GM12878 (cell line): ENCODE measurements at regions of chr12 and their contacts with region 1.

Region 1: DNA sequence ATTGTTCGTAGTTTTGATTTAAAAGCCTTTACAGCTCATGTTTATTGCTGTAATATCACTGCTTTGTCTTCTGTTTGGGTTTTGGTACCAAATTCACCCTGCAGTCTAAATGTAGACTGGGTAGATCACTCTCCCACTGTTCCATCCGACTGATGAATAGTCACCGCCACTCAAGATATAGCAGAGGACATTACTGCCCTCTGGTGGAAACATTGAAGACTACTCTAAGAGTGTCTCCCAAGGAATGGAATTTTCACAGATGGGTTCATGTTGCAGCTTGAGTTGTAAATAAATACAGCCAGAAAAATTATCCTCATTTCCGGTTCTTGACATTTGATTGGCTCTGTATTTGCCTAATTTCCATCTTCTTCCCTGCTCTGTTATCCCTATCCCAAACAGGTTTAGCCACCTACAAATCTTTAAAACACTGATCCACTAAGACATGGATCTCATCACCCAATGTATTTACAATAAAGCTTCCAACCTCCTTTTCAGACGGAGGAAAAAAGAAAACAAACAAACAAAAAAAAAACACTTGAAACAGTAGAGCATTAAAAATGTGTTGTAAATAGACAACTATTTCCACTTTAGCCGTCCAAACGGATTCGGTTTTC is 198.3 kb upstream of the CPNE8 start:
- DNase-seq: peak; percentile 15
- ATAC-seq: peak; percentile 99
- H3K4me3 ChIP-seq: no peak overlapping the region
- H3K27ac ChIP-seq: no peak overlapping the region
- H3K4me1 ChIP-seq: no peaks in the 10 kb centered on the region
- H3K27me3 ChIP-seq: no peaks in the 10 kb centered on the region
- CTCF ChIP-seq: peak; percentile 66 to 77 (median 67)
- EP300 ChIP-seq: no peak
- POLR2A ChIP-seq: no peak
- RAD21 ChIP-seq: peak; percentile 94

Region 2: DNA sequence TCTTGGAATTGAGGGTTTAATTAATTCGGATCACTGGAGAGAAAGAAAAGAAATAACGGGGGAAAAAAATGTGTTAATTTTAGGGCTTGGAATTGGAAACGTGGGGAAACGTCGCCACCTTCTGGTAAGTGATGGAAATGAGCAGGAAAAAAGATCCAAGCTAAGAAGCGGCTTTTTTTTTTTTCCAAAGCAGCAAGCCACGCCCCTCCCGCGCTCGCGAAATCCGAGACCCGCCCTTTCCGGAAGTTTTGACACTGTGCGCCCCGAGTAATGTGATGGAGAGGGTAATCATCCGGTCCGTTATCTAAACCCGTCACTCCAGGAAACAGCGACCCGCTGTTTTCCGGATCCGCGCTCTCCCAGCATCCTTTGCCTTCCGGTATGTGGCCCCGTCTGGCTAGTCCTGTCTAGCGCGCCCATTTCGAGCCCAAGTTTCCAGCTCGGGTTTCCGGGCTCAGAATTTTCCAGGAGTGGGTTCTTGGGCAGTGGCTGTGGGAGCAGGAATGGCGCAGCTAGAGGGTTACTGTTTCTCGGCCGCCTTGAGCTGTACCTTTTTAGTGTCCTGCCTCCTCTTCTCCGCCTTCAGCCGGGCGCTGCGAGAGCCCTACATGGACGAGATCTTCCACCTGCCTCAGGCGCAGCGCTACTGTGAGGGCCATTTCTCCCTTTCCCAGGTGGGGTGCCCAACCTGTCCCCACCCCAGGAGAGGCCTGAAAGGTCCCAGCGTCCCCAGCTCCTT is 787.1 kb before region 1 on chr12 and contains the start of gene ALG10B:
- CTCF ChIA-PET with region 1: interaction called, 13 read pairs
- POLR2A ChIA-PET with region 1: no interaction called
- RAD21 ChIA-PET with region 1: interaction called, 4 read pairs
- SMC1A ChIA-PET with region 1: interaction called, 4 read pairs
- in situ Hi-C with region 1: no loop called
- intact Hi-C with region 1: no loop called
- DNase-seq: peak; percentile 84
- ATAC-seq: peak; percentile 100
- H3K4me3 ChIP-seq: peak within 1 kb of the TSS; percentile 86
- H3K27ac ChIP-seq: peak within 1 kb of the TSS; percentile 73
- H3K4me1 ChIP-seq: no peaks in the 10 kb centered on the region
- H3K27me3 ChIP-seq: no peaks in the 10 kb centered on the region
- CTCF ChIP-seq: peak; percentile 53 to 61 (median 58); a peak in 5 of 6 replicates
- EP300 ChIP-seq: no peak
- POLR2A ChIP-seq: peak; percentile 73
- RAD21 ChIP-seq: peak; percentile 73
- polyA plus RNA-seq, gene ALG10B: 2.0 to 4.5 TPM

Region 3: GRCh38 chr12:38332814-38333213 is 770.8 kb before region 1 on chr12:
- CTCF ChIA-PET with region 1: interaction called, 38 read pairs
- POLR2A ChIA-PET with region 1: no interaction called
- RAD21 ChIA-PET with region 1: interaction called, 13 read pairs
- SMC1A ChIA-PET with region 1: interaction called, 12 read pairs
- in situ Hi-C with region 1: loop called (anchors 5 kb)
- intact Hi-C with region 1: loop called (anchors 1 kb)
- DNase-seq: no peak
- ATAC-seq: no peak
- H3K4me3 ChIP-seq: no peak overlapping the region
- H3K27ac ChIP-seq: no peak overlapping the region
- H3K4me1 ChIP-seq: no peaks in the 10 kb centered on the region
- H3K27me3 ChIP-seq: no peaks in the 10 kb centered on the region
- CTCF ChIP-seq: no peak
- EP300 ChIP-seq: no peak
- POLR2A ChIP-seq: no peak
- RAD21 ChIP-seq: no peak

Region 4: DNA sequence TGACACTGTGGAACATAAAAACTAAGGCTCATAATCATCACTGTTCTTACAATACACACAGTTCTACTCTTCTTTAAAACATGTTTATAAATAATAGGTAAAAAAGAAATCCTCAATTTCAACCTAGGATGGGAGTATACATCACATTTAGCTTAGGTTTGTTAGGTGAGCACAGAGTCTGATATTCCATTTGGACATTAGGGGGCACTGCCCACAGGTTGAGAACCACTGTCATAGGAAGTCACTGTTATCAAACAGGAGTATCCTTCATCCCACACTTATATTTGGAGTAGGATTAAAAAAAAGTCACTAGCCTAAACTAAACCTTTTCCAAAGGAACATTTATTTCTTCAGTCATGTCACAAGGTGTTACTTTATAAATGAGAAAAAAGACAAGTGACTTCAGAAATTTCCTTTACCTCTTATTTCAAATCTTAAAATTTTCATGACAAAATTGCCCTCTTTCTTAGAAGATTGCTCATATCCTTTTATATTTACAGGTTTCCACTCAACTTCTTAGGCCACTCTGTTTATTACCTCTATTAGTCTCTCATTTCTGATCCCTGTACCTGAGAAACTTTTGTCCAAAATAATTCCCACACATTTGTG is 438.9 kb before region 1 on chr12:
- CTCF ChIA-PET with region 1: interaction called, 15 read pairs
- POLR2A ChIA-PET with region 1: no interaction called
- RAD21 ChIA-PET with region 1: interaction called, 3 read pairs
- SMC1A ChIA-PET with region 1: interaction called, 4 read pairs
- in situ Hi-C with region 1: loop called (anchors 25 kb)
- intact Hi-C with region 1: loop called (anchors 10 kb)
- DNase-seq: peak; percentile 15
- ATAC-seq: peak; percentile 94
- H3K4me3 ChIP-seq: no peak overlapping the region
- H3K27ac ChIP-seq: no peak overlapping the region
- H3K4me1 ChIP-seq: no peaks in the 10 kb centered on the region
- H3K27me3 ChIP-seq: no peaks in the 10 kb centered on the region
- CTCF ChIP-seq: peak; percentile 58 to 65 (median 61)
- EP300 ChIP-seq: no peak
- POLR2A ChIP-seq: no peak
- RAD21 ChIP-seq: peak; percentile 63

Region 5: GRCh38 chr12:38921025-38921677 is 182.5 kb before region 1 on chr12:
- CTCF ChIA-PET with region 1: interaction called, 118 read pairs
- POLR2A ChIA-PET with region 1: no interaction called
- RAD21 ChIA-PET with region 1: interaction called, 44 read pairs
- SMC1A ChIA-PET with region 1: interaction called, 90 read pairs
- in situ Hi-C with region 1: loop called (anchors 5 kb)
- intact Hi-C with region 1: loop called (anchors 1 kb)
- DNase-seq: no peak
- ATAC-seq: peak; percentile 95
- H3K4me3 ChIP-seq: no peak overlapping the region
- H3K27ac ChIP-seq: no peak overlapping the region
- H3K4me1 ChIP-seq: no peaks in the 10 kb centered on the region
- H3K27me3 ChIP-seq: no peaks in the 10 kb centered on the region
- CTCF ChIP-seq: peak; percentile 60 to 73 (median 61)
- EP300 ChIP-seq: no peak
- POLR2A ChIP-seq: no peak
- RAD21 ChIP-seq: peak; percentile 63

Region 6: DNA sequence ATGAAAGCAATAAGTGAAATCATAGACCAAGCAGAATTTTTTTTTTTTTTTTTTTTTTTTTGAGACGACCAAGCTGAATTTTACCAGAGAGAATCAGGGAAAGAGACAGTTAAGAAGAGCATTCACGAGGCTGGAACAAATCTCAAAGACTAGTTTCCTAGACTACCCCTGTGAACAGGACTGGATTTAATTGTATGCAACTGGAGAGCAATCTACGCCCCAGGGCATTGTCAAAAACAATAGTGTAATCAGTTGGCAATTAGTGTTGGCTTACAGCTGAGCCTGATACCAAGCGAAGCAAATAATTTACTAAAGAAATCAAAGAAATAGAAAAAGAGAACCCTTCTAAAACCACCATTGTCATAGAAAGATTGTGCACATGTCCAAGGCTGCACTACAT is 34.6 kb after region 1 on chr12:
- CTCF ChIA-PET with region 1: no interaction called
- POLR2A ChIA-PET with region 1: no interaction called
- RAD21 ChIA-PET with region 1: no interaction called
- SMC1A ChIA-PET with region 1: no interaction called
- in situ Hi-C with region 1: no loop called
- intact Hi-C with region 1: no loop called
- DNase-seq: no peak
- ATAC-seq: no peak
- H3K4me3 ChIP-seq: no peak overlapping the region
- H3K27ac ChIP-seq: no peak overlapping the region
- H3K4me1 ChIP-seq: no peaks in the 10 kb centered on the region
- H3K27me3 ChIP-seq: no peaks in the 10 kb centered on the region
- CTCF ChIP-seq: no peak
- EP300 ChIP-seq: no peak
- POLR2A ChIP-seq: no peak
- RAD21 ChIP-seq: no peak